T-cell (primary cell): ENCODE measurements at regions of chr6 and their contacts with region 1.

Region 1: DNA sequence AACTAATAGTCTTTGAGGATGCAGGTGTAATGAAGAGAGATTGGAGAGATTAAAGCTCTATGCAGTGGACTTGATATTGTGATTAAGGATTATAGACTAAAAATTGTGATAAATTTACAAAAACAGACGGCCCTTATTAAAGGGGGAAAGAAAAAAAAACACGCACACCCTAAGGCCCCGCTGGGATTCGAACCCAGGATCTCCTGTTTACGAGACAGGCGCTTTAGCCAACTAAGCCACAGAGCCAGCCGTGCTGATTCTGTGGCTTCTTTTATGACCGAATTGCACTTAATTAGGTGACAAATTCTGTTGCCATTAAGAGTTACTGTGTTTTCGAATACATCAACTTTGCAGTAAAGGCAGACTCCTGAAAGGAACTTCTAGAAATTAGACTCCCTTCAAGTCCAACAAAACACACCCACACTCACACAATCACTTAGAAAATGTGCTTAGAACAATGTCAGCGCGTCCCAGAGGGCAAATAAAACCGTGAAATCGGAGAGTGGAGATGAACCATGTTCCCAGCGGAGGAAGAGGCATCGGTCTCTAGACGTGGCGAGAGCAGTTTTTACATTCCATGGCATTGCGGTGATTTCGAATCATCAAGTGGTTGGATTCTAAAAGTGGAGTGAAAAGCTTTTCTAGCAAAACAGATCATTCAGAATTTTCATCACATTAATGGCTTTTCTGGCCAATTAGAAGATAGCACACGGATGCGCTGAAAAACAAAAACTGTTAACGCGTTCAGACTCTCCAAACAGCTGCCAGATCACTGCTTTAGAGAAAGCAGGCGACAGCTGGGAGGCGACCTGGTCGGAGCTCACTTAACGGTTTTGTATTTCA is 122.6 kb downstream of the GPX5 start:
- DNase-seq: peak in 12 of 35 experiments; percentile 2 to 42 (median 12)
- ATAC-seq: peak in 1 of 4 experiments; percentile 55
- H3K4me3 ChIP-seq: peak overlapping the region in 1 of 2 donors; percentile 9
- H3K4me3 Mint-ChIP-seq: peak overlapping the region; percentile 21 to 75 (median 53)
- H3K27ac ChIP-seq: no peak overlapping the region
- H3K27ac Mint-ChIP-seq: no peak overlapping the region
- H3K4me1 ChIP-seq: peaks cover 0 to 12% of the 10 kb centered on the region in 2 experiments
- H3K4me1 Mint-ChIP-seq: peaks cover 5 to 13% (median 11%) of the 10 kb centered on the region in 3 donors
- H3K27me3 ChIP-seq: peaks cover 6 to 29% of the 10 kb centered on the region in 2 experiments
- H3K27me3 Mint-ChIP-seq: peaks cover 53 to 64% of the 10 kb centered on the region in 2 donors

Region 2: GRCh38 chr6:28462401-28462800 is 185.9 kb before region 1 on chr6:
- CTCF ChIA-PET with region 1: no interaction called
- POLR2A ChIA-PET with region 1: no interaction called
- DNase-seq: no peak
- ATAC-seq: peak in 1 of 4 experiments; percentile 52
- H3K4me3 ChIP-seq: no peak overlapping the region
- H3K4me3 Mint-ChIP-seq: no peak overlapping the region
- H3K27ac ChIP-seq: no peak overlapping the region
- H3K27ac Mint-ChIP-seq: no peak overlapping the region
- H3K4me1 ChIP-seq: no peaks in the 10 kb centered on the region
- H3K4me1 Mint-ChIP-seq: peaks cover 0 to 6% (median 5%) of the 10 kb centered on the region in 3 donors
- H3K27me3 ChIP-seq: peaks cover 2 to 8% of the 10 kb centered on the region in 2 experiments
- H3K27me3 Mint-ChIP-seq: peaks cover 49 to 50% of the 10 kb centered on the region in 2 donors

Region 3: DNA sequence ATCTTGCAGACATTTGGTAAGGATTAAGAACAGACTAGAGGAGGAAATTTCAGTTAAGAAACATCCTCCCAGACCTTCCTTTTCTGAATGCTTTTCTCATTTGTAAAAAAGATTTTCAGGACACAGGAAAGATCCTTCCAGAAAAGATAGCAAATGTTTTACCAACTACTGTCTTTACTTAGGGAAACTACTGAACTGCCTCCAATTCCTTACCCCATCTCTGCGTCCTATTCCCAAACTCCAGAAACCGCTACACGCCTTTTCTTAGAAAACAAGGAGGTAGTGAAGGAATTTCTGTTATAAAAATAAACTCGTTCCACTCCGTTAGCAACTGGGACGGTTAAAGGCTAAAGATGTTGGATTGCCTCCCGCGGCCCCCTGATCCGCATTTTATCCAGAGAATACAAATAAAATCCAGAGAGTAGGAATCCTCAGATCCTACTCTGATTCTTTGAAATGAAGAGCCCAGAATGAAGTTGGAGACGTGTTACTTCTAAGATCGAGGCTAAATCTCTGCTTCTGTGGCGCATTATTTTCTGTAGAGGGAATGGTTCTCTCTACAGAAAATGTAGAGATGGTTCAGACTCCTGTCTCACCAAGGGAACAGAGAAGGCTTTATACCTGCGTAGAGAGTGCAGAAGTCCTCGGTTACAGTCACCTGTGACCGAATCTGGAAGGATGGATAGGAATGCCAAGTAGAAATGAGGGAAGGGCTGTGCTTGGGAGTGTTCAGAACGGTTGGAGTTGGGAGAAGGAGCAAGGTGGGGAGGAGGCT is 10.4 kb after region 1 on chr6:
- CTCF ChIA-PET with region 1: no interaction called
- POLR2A ChIA-PET with region 1: no interaction called
- DNase-seq: no peak
- ATAC-seq: peak in 1 of 4 experiments; percentile 15
- H3K4me3 ChIP-seq: no peak overlapping the region
- H3K4me3 Mint-ChIP-seq: peak overlapping the region; percentile 59 to 81 (median 67)
- H3K27ac ChIP-seq: no peak overlapping the region
- H3K27ac Mint-ChIP-seq: no peak overlapping the region
- H3K4me1 ChIP-seq: peaks cover 2 to 11% of the 10 kb centered on the region in 2 experiments
- H3K4me1 Mint-ChIP-seq: peaks cover 21 to 27% (median 22%) of the 10 kb centered on the region in 3 donors
- H3K27me3 ChIP-seq: peaks cover 17 to 38% of the 10 kb centered on the region in 2 experiments
- H3K27me3 Mint-ChIP-seq: peaks cover 63 to 79% of the 10 kb centered on the region in 2 donors

Region 4: GRCh38 chr6:28758046-28758817 is 110.0 kb after region 1 on chr6:
- CTCF ChIA-PET with region 1: no interaction called
- POLR2A ChIA-PET with region 1: no interaction called
- DNase-seq: no peak
- ATAC-seq: no peak
- H3K4me3 ChIP-seq: no peak overlapping the region
- H3K4me3 Mint-ChIP-seq: no peak overlapping the region
- H3K27ac ChIP-seq: no peak overlapping the region
- H3K27ac Mint-ChIP-seq: no peak overlapping the region
- H3K4me1 ChIP-seq: no peaks in the 10 kb centered on the region
- H3K4me1 Mint-ChIP-seq: peaks cover 0 to 2% (median 0%) of the 10 kb centered on the region in 3 donors
- H3K27me3 ChIP-seq: peaks cover 2 to 36% of the 10 kb centered on the region in 2 experiments
- H3K27me3 Mint-ChIP-seq: peaks cover 65% of the 10 kb centered on the region in 2 donors

Region 5: DNA sequence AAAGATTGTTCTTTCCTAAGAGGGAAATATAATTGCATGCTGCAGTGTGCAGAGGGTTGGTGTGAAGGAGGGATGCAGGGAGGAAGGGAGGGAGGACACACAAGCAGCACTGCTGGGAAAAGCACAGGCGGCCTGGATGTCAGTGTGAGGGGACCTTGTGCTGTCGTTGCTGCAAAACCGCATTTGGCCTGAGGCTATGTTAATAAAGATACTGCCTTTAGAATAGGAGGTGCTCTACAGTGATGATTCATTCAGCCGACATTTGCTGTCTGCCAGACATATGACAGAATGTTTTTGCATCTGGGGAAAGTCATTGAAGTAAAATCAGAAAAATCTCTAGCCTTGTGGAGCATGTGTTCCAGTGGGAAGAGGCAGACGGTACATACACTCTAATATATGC is 1615.5 kb after region 1 on chr6:
- CTCF ChIA-PET with region 1: interaction called in 1 of 2 experiments, 13 read pairs
- POLR2A ChIA-PET with region 1: no interaction called
- DNase-seq: no peak
- ATAC-seq: no peak
- H3K4me3 ChIP-seq: no peak overlapping the region
- H3K4me3 Mint-ChIP-seq: no peak overlapping the region
- H3K27ac ChIP-seq: no peak overlapping the region
- H3K27ac Mint-ChIP-seq: no peak overlapping the region
- H3K4me1 ChIP-seq: peaks cover 3 to 19% of the 10 kb centered on the region in 2 experiments
- H3K4me1 Mint-ChIP-seq: peaks cover 5 to 12% (median 9%) of the 10 kb centered on the region in 3 donors
- H3K27me3 ChIP-seq: no peaks in the 10 kb centered on the region
- H3K27me3 Mint-ChIP-seq: peaks cover 0 to 3% of the 10 kb centered on the region in 2 donors